IMR-90 (cell line): ENCODE measurements at regions of chr11 and their contacts with region 1.

Region 1: DNA sequence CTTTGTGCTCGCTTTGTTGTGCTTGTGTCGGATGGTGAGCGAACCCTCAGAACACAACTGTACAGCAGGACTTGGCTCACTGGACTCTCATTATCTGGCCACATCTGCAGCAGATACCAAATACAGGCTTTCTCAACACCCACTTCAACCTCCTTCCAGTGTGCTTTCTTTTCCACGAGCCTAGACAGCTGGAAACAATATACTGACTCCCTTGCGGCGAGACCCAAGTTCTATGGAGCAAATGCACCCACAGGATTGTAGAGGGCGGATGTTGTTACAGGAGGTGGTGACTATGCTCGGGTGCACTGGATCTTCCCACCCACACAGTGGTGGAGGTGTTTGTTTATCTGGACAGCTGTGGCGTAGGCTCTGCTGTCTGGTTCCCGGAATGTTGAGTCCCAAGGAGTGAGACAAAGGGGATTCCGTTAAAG is 204.3 kb downstream of the TENM4 start:
- DNase-seq: peak; percentile 99
- ATAC-seq: peak; percentile 81
- H3K4me3 ChIP-seq: no peak overlapping the region
- H3K27ac ChIP-seq: peak overlapping the region; percentile 54
- H3K4me1 ChIP-seq: peaks cover 16% of the 10 kb centered on the region
- H3K27me3 ChIP-seq: no peaks in the 10 kb centered on the region
- CTCF ChIP-seq: no peak
- POLR2A ChIP-seq: no peak; the same call in 1 of the 2 replicates
- RAD21 ChIP-seq: no peak

Region 2: GRCh38 chr11:79092791-79093353 is 143.7 kb before region 1 on chr11:
- CTCF ChIA-PET with region 1: no interaction called
- POLR2A ChIA-PET with region 1: no interaction called
- dilution Hi-C with region 1: no loop called
- in situ Hi-C with region 1: no loop called
- intact Hi-C with region 1: loop called (anchors 2 kb)
- DNase-seq: peak; percentile 100
- ATAC-seq: peak; percentile 81
- H3K4me3 ChIP-seq: no peak overlapping the region
- H3K27ac ChIP-seq: peak overlapping the region; percentile 88
- H3K4me1 ChIP-seq: peaks cover 18% of the 10 kb centered on the region
- H3K27me3 ChIP-seq: no peaks in the 10 kb centered on the region
- CTCF ChIP-seq: no peak
- POLR2A ChIP-seq: no peak
- RAD21 ChIP-seq: no peak

Region 3: DNA sequence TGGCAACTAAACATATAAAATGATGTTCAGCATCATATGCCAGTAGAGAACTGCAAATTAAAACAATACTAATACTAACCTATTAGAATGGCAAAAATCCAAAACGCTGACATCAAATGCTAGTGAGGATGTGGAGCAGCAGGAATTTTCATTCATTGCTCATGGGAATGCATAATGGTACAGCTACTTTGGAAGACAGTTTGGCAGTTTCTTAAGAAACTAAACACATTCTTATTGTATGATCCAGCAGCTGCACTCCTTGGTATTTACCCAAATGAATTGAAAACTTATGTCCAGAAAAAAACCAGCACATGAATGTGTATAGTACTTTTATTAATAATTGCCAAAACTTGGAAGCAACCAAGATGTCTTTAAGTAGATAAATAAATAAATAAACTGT is 53.8 kb before region 1 on chr11:
- CTCF ChIA-PET with region 1: no interaction called
- POLR2A ChIA-PET with region 1: no interaction called
- dilution Hi-C with region 1: no loop called
- in situ Hi-C with region 1: no loop called
- intact Hi-C with region 1: loop called (anchors 2 kb)
- DNase-seq: peak; percentile 97
- ATAC-seq: peak; percentile 92
- H3K4me3 ChIP-seq: no peak overlapping the region
- H3K27ac ChIP-seq: no peak overlapping the region
- H3K4me1 ChIP-seq: peaks cover 4% of the 10 kb centered on the region; the same call in 1 of the 2 replicates
- H3K27me3 ChIP-seq: no peaks in the 10 kb centered on the region
- CTCF ChIP-seq: no peak
- POLR2A ChIP-seq: no peak
- RAD21 ChIP-seq: no peak

Region 4: GRCh38 chr11:79274636-79275331 is 38.2 kb after region 1 on chr11:
- CTCF ChIA-PET with region 1: no interaction called
- POLR2A ChIA-PET with region 1: no interaction called
- dilution Hi-C with region 1: no loop called
- in situ Hi-C with region 1: no loop called
- intact Hi-C with region 1: loop called (anchors 5 kb)
- DNase-seq: peak; percentile 77
- ATAC-seq: peak; percentile 80
- H3K4me3 ChIP-seq: no peak overlapping the region
- H3K27ac ChIP-seq: no peak overlapping the region
- H3K4me1 ChIP-seq: peaks cover 6% of the 10 kb centered on the region; the same call in 1 of the 2 replicates
- H3K27me3 ChIP-seq: no peaks in the 10 kb centered on the region
- CTCF ChIP-seq: no peak
- POLR2A ChIP-seq: no peak
- RAD21 ChIP-seq: no peak